ENCODE measurements at regions of chr12 and their contacts with region 1.

Region 1: DNA sequence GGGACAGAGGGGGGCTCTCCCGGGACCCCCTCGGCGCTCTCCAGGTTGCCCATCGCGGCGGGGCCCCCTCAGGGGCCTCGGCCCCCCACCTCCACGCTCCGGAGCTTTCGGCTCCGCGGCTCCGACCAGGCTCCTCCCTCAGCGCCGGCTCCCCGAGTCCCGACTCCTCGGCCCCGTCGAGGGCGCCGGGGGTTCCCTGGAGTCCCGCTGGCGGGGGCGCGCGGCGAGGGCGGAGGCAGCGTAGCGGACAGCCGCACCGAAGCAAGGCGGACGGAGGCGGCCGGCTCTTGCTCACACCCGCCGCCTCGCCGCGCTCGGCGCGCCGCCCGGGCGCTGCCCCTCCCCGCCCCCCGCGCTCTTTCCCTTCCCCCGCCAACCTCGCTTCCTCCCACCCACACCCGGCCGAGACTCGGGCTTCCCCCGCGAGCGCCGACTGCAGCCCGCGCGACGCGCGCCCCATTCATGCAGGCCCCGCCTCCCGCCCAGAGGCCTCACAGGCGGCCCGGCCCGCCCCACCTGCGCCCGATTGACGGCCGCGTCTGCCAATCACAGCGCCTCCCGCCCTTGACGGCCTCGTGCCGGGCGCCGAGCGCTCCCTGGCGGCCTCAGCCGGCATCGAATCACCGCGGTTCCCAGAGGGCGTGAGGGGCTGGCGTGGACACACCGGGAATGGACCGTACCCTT is at the start of gene FMNL3:
- DNase-seq: peak; percentile 98
- H3K4me3 Mint-ChIP-seq: peak within 1 kb of the TSS; percentile 89
- H3K27ac Mint-ChIP-seq: peak within 1 kb of the TSS; percentile 85
- H3K4me1 Mint-ChIP-seq: peaks cover 45% of the 10 kb centered on the region
- H3K27me3 Mint-ChIP-seq: peaks cover 2% of the 10 kb centered on the region
- total RNA-seq, gene FMNL3: 20.0 to 20.7 TPM

Region 2: GRCh38 chr12:49553512-49554088 is 153.7 kb before region 1 on chr12:
- CTCF ChIA-PET with region 1: no interaction called
- intact Hi-C with region 1: loop called (anchors 1 kb)
- DNase-seq: peak; percentile 29
- H3K4me3 Mint-ChIP-seq: no peak overlapping the region
- H3K27ac Mint-ChIP-seq: no peak overlapping the region
- H3K4me1 Mint-ChIP-seq: peaks cover 4% of the 10 kb centered on the region
- H3K27me3 Mint-ChIP-seq: no peaks in the 10 kb centered on the region

Region 3: DNA sequence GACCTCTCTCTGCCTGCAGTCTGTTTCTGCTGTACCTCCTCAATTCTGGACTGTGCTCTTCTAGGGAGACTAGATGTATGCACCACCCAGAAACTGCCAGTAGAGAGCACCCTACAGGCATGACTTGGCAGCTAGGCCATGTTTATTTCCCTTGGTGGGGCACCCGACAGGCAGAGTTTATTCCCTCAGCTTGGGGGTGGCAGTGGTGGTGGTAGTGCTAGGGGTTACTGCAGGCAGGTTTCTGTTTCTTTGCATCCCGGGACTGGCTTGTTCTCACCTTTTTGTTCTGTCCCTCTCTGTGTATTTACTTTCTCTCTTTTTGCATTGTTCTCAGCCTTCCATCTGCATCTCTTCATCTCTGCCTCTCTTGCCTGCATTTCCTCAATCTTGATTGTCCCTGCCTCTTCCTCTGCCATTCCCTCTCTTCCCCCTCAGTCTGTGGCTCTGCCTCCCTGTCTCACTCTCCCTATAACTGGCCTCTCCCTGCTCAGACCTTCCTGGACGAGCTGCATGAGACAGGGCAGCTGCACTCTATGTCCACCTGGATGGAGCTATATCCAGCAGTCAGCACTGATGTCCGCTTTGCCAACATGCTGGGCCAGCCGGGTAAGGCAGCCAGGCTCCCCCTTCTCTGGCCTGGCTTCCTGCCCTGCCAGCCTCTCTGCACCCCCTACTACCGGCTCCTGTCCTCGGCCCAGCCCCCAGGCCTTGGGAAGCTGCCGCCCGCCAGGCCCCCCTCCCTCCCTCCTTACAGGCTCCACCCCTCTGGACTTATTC is 70.1 kb before region 1 on chr12:
- CTCF ChIA-PET with region 1: interaction called, 450 read pairs
- intact Hi-C with region 1: loop called (anchors 1 kb)
- DNase-seq: peak; percentile 80
- H3K4me3 Mint-ChIP-seq: no peak overlapping the region
- H3K27ac Mint-ChIP-seq: no peak overlapping the region
- H3K4me1 Mint-ChIP-seq: peaks cover 14% of the 10 kb centered on the region
- H3K27me3 Mint-ChIP-seq: no peaks in the 10 kb centered on the region

Region 4: DNA sequence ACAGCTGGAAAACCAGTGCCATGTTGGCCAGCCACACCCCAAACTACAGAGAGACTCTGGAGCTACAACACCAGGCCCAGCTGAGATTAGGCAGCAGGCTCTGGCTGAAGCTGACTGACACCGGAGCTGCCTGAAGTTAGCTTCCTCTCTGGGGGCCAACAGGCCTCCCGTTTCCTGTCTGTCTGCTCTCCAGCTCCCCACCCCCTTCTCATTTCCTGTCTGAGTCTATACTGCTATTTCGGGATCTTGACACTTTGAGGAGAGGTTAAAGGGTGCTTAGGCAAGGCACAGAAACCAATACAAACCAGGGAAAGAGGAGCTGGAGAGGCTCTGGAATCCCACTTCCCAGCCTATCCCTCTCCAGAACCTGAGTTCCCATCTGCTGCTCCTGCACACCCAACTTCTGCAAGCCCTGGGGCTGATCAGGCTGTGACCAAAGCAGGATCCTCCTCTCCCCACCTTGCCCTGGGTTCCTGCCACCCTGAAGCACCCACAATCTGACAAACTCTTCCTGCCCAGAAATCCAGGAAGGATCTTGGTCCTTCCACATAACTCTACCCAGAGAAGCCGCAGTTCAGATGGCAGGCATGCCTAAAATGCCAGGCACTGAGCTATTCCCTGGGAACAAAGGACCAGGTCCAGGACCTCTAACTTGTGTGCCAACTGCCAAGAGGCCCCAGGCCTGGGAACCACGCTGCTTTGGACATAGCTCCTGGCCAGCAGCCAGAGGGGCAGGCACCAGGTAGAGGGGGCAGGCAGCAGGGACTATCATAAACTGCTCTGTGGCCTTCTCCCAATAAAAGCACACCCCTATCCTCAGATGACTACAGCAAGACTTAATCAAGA is 44.0 kb before region 1 on chr12:
- CTCF ChIA-PET with region 1: interaction called, 40 read pairs
- intact Hi-C with region 1: loop called (anchors 1 kb)
- DNase-seq: peak; percentile 90
- H3K4me3 Mint-ChIP-seq: peak overlapping the region; percentile 63
- H3K27ac Mint-ChIP-seq: peak overlapping the region; percentile 87
- H3K4me1 Mint-ChIP-seq: peaks cover 81% of the 10 kb centered on the region
- H3K27me3 Mint-ChIP-seq: no peaks in the 10 kb centered on the region

Region 5: GRCh38 chr12:49740930-49741881 is 33.9 kb after region 1 on chr12 and contains the start of gene TMBIM6:
- CTCF ChIA-PET with region 1: interaction called, 15 read pairs
- intact Hi-C with region 1: loop called (anchors 1 kb)
- DNase-seq: peak; percentile 99
- H3K4me3 Mint-ChIP-seq: peak within 1 kb of the TSS; percentile 100
- H3K27ac Mint-ChIP-seq: peak within 1 kb of the TSS; percentile 100
- H3K4me1 Mint-ChIP-seq: peaks cover 34% of the 10 kb centered on the region
- H3K27me3 Mint-ChIP-seq: no peaks in the 10 kb centered on the region
- total RNA-seq, gene TMBIM6: 466 to 498 TPM